ENCODE measurements at regions of chr14 and their contacts with region 1.

Region 1: DNA sequence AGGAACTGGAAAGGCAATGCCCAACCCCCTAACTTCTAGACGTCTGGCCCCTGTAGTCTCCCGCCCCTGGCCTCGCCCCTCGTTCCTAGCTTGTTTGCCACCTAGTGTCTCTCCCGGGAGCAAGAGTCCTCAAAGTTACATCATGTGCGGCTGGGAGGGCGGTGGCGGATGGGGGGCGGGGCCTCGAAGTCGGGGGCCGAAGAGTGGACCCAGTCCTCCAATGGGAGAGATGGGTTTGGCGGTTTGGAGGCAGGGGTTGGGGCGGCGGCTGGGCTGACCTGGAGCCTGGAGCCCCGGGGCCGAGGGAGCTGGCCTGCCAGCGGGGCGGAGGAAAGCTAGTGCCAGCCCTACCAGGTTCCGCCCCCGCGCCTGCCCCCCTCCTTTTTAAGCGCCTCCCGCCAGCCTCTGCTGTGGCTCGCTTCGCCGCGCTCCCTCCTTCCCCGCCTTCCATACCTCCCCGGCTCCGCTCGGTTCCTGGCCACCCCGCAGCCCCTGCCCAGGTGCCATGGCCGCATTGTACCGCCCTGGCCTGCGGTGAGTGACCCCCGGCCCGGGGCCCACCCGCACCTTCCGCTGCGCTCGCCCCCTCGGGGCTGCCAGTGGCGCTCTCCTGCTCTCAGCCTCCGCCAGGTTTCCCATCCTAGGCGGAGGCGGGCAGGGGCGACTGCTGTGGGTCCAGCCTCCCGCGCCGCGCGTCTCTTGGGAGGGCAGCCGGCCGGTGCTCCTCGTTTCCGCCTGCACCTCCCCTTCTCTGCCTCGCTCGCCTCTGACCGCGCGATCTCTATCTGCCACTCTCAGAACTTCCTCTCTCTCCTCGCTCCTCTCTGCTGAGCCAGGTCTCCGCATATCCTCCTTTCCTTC is at the start of gene PCK2:
- DNase-seq: peak; percentile 94
- H3K4me3 ChIP-seq: peak within 1 kb of the TSS; percentile 78
- H3K27ac ChIP-seq: peak within 1 kb of the TSS; percentile 94
- H3K4me1 ChIP-seq: peaks cover 12% of the 10 kb centered on the region
- H3K27me3 ChIP-seq: no peaks in the 10 kb centered on the region
- CTCF ChIP-seq: 0 out of 2 replicates have a peak, but pooled peaks have one; percentile 9
- total RNA-seq, gene PCK2: 16.8 and 46.3 TPM in 2 replicates

Region 2: DNA sequence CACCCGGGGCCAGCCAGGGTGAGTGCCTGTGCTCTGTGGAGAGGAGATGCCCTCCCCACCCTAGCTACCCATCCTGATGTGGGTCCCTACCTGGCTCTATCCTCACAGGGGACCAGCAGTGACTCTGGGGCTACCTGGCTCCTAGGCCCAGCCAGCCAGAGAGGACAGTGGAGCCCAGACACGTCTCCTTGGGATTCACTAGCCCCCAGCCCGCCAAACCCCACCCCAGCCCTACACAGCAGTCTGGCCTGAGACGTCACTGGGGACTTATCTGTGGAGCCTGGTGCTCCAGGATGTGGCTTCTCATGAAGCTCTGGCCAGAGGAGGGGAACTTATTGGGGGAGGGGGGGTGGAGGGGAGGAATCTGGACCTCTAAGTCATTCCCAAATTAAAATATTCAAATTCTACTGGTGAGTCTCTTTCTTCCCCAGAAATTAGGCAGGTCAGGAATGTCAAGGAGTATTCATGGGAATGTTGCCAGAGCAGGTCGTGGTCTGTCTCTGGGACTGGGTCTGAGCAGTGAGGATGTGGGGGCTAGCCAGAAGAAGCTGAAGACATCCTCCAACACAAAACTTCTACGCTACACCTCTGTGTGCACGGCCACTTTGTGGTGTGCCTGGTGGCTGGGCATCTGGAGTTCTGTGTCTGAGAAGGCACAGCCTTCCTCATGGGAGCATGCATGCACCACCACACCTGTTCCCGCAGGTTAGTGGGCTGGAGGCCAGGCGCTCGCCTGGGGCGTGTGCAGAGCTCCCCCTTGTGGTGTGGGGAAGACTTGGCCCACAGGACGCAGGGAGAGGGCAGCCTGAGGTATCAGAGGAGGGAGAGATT is 714.5 kb before region 1 on chr14:
- CTCF ChIA-PET with region 1: interaction called, 11 read pairs
- POLR2A ChIA-PET with region 1: no interaction called
- intact Hi-C with region 1: no loop called
- DNase-seq: peak; percentile 50
- H3K4me3 ChIP-seq: no peak overlapping the region
- H3K27ac ChIP-seq: no peak overlapping the region
- H3K4me1 ChIP-seq: peaks cover 8% of the 10 kb centered on the region
- H3K27me3 ChIP-seq: no peaks in the 10 kb centered on the region
- CTCF ChIP-seq: peak; percentile 97

Region 3: GRCh38 chr14:24058260-24058950 is 35.7 kb before region 1 on chr14:
- CTCF ChIA-PET with region 1: interaction called, 13 read pairs
- POLR2A ChIA-PET with region 1: no interaction called
- intact Hi-C with region 1: loop called (anchors 1 kb)
- DNase-seq: peak; percentile 80
- H3K4me3 ChIP-seq: no peak overlapping the region
- H3K27ac ChIP-seq: no peak overlapping the region
- H3K4me1 ChIP-seq: no peaks in the 10 kb centered on the region
- H3K27me3 ChIP-seq: peaks cover 3% of the 10 kb centered on the region
- CTCF ChIP-seq: peak; percentile 80

Region 4: DNA sequence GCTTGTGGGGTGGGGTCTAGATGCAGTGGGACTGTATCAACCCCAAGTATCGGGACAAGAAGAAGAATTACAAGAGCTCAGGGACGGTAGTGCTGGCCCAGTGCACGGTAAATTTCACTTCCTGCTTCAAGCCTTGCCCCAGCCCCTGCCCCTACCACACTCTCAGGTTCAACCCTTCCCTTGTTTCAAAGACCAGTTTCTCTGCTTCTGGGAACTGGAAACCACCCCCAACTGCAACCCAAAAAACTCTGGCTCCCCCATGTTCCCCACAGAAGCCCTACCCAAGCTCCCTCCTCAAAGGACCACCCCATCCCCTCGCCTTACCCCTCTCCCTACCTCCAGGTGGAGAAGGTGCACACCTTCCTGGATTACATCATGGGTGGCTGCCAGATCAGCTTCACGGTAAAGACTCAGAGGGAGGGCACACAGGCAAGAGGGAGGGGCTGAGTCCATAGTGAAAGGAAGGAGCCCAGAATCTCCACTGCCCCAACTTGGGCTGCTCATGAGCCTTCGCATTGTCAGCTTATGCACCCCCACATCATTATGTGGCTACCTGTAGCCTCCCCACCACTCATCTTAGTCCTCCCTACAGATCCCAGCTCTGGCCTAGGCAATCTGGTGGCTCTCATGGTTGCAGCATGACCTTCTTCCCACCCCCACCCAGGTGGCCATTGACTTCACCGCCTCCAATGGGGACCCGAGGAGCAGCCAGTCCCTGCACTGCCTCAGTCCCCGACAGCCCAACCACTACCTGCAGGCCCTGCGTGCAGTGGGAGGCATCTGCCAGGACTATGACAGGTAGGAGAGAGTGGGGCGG is 18.4 kb before region 1 on chr14:
- CTCF ChIA-PET with region 1: interaction called, 4 read pairs
- POLR2A ChIA-PET with region 1: interaction called, 11 read pairs
- intact Hi-C with region 1: no loop called
- DNase-seq: no peak
- H3K4me3 ChIP-seq: no peak overlapping the region
- H3K27ac ChIP-seq: no peak overlapping the region
- H3K4me1 ChIP-seq: peaks cover 3% of the 10 kb centered on the region
- H3K27me3 ChIP-seq: peaks cover 18% of the 10 kb centered on the region
- CTCF ChIP-seq: no peak

Region 5: GRCh38 chr14:24108336-24108874 is 14.3 kb after region 1 on chr14:
- CTCF ChIA-PET with region 1: interaction called, 11 read pairs
- POLR2A ChIA-PET with region 1: interaction called, 5 read pairs
- intact Hi-C with region 1: no loop called
- DNase-seq: no peak
- H3K4me3 ChIP-seq: no peak overlapping the region
- H3K27ac ChIP-seq: no peak overlapping the region
- H3K4me1 ChIP-seq: peaks cover 2% of the 10 kb centered on the region
- H3K27me3 ChIP-seq: no peaks in the 10 kb centered on the region
- CTCF ChIP-seq: no peak

Region 6: GRCh38 chr14:24114536-24115450 is 20.7 kb after region 1 on chr14 and contains the starts of genes DCAF11 and NRL:
- CTCF ChIA-PET with region 1: no interaction called
- POLR2A ChIA-PET with region 1: interaction called, 13 read pairs
- intact Hi-C with region 1: no loop called
- DNase-seq: peak; percentile 100
- H3K4me3 ChIP-seq: peak within 1 kb of the TSS; percentile 82
- H3K27ac ChIP-seq: peak within 1 kb of the TSS; percentile 99
- H3K4me1 ChIP-seq: peaks cover 14% of the 10 kb centered on the region
- H3K27me3 ChIP-seq: no peaks in the 10 kb centered on the region
- CTCF ChIP-seq: no peak
- total RNA-seq, gene DCAF11: 45.5 and 49.1 TPM in 2 replicates
- total RNA-seq, gene NRL: 1.6 and 1.9 TPM in 2 replicates